GM12878 (cell line): ENCODE measurements at regions of chr5 and their contacts with region 1.

Region 1: DNA sequence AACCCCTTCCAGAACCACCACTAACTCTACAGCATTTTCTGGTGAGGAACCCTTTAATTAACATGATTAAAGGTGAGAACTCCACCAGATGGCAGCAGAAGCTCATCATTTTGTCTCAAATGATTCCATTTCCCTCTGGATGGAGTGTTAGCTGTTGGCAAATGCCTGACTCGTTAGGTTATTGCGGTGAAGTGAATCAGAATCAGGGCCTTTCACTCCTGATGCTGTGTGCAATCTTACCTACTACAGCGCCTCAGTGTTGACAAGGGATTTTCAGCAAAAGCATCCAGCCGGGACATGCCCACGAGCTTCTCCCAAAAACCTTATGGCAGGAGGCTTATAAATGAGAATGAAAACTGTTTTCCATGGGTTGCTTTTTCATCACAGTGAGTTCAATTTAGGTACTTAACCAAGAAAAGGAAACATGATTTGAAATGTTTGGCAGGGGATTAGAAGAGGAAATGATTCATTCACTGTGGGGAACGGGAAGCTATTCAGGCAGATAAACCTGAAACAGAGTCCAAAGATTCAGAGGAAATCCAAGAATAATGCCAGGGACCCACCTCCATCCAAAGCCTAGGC is 48.0 kb upstream of the CAST start:
- DNase-seq: peak; percentile 25
- ATAC-seq: peak; percentile 86
- H3K4me3 ChIP-seq: no peak overlapping the region
- H3K27ac ChIP-seq: no peak overlapping the region
- H3K4me1 ChIP-seq: no peaks in the 10 kb centered on the region
- H3K27me3 ChIP-seq: no peaks in the 10 kb centered on the region; a peak in 2 of 4 replicates
- CTCF ChIP-seq: peak; percentile 24 to 71 (median 45); a peak in 4 of 6 replicates
- EP300 ChIP-seq: no peak
- POLR2A ChIP-seq: no peak
- RAD21 ChIP-seq: peak; percentile 87

Region 2: DNA sequence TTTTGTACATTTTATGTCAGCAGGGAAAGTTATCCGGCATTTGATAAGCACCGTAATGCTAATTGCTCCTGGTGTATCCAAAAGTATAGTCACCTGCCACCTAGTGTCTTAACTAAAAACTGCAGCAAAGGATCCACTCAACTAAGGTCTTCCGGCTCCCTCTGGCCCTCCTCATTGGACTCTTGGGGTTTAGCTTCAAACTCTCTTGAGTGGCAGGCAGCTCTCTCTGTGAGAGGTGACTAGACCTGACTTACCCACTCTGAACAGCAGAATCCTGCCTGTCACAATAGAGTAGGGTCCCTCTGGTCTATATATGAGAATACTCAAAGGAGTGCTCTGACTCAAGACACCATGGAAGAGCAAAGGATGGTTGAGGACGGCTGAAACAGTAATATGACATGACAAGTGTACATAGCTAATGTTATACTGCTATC is 12.4 kb before region 1 on chr5:
- CTCF ChIA-PET with region 1: interaction called, 49 read pairs
- POLR2A ChIA-PET with region 1: no interaction called
- RAD21 ChIA-PET with region 1: interaction called, 6 read pairs
- SMC1A ChIA-PET with region 1: interaction called, 13 read pairs
- in situ Hi-C with region 1: no loop called
- intact Hi-C with region 1: no loop called
- DNase-seq: peak; percentile 16
- ATAC-seq: peak; percentile 96
- H3K4me3 ChIP-seq: no peak overlapping the region
- H3K27ac ChIP-seq: no peak overlapping the region
- H3K4me1 ChIP-seq: no peaks in the 10 kb centered on the region
- H3K27me3 ChIP-seq: no peaks in the 10 kb centered on the region
- CTCF ChIP-seq: peak; percentile 71 to 83 (median 77)
- EP300 ChIP-seq: no peak
- POLR2A ChIP-seq: no peak
- RAD21 ChIP-seq: peak; percentile 62

Region 3: GRCh38 chr5:96662725-96663513 is 48.7 kb after region 1 on chr5:
- CTCF ChIA-PET with region 1: interaction called, 6 read pairs
- POLR2A ChIA-PET with region 1: no interaction called
- RAD21 ChIA-PET with region 1: interaction called, 11 read pairs
- SMC1A ChIA-PET with region 1: interaction called, 3 read pairs
- in situ Hi-C with region 1: no loop called
- intact Hi-C with region 1: no loop called
- DNase-seq: peak; percentile 50
- ATAC-seq: peak; percentile 87
- H3K4me3 ChIP-seq: peak overlapping the region; percentile 75
- H3K27ac ChIP-seq: peak overlapping the region; percentile 70
- H3K4me1 ChIP-seq: peaks cover 6% of the 10 kb centered on the region
- H3K27me3 ChIP-seq: no peaks in the 10 kb centered on the region; a peak in 1 of 4 replicates
- CTCF ChIP-seq: no peak
- EP300 ChIP-seq: no peak
- POLR2A ChIP-seq: peak; percentile 71
- RAD21 ChIP-seq: no peak

Region 4: GRCh38 chr5:96702503-96703383 is 88.5 kb after region 1 on chr5:
- CTCF ChIA-PET with region 1: interaction called, 16 read pairs
- POLR2A ChIA-PET with region 1: no interaction called
- RAD21 ChIA-PET with region 1: interaction called, 5 read pairs
- SMC1A ChIA-PET with region 1: interaction called, 4 read pairs
- in situ Hi-C with region 1: no loop called
- intact Hi-C with region 1: no loop called
- DNase-seq: no peak
- ATAC-seq: peak; percentile 85
- H3K4me3 ChIP-seq: peak overlapping the region; percentile 78
- H3K27ac ChIP-seq: peak overlapping the region; percentile 60
- H3K4me1 ChIP-seq: peaks cover 8% of the 10 kb centered on the region; the same call in 1 of the 2 replicates
- H3K27me3 ChIP-seq: no peaks in the 10 kb centered on the region
- CTCF ChIP-seq: no peak
- EP300 ChIP-seq: 0 out of 4 replicates have a peak, but pooled peaks of 1 of the 2 experiments have one; percentile 14
- POLR2A ChIP-seq: peak; percentile 65
- RAD21 ChIP-seq: no peak

Region 5: GRCh38 chr5:96729156-96729555 is 115.0 kb after region 1 on chr5:
- CTCF ChIA-PET with region 1: interaction called, 33 read pairs
- POLR2A ChIA-PET with region 1: no interaction called
- RAD21 ChIA-PET with region 1: interaction called, 13 read pairs
- SMC1A ChIA-PET with region 1: interaction called, 21 read pairs
- in situ Hi-C with region 1: no loop called
- intact Hi-C with region 1: loop called (anchors 1 kb)
- DNase-seq: no peak
- ATAC-seq: no peak
- H3K4me3 ChIP-seq: no peak overlapping the region
- H3K27ac ChIP-seq: no peak overlapping the region
- H3K4me1 ChIP-seq: no peaks in the 10 kb centered on the region
- H3K27me3 ChIP-seq: no peaks in the 10 kb centered on the region
- CTCF ChIP-seq: peak in 1 of 3 experiments; percentile 36; a peak in 1 of 6 replicates
- EP300 ChIP-seq: no peak
- POLR2A ChIP-seq: no peak
- RAD21 ChIP-seq: peak; percentile 28; the same call in 1 of the 2 replicates

Region 6: DNA sequence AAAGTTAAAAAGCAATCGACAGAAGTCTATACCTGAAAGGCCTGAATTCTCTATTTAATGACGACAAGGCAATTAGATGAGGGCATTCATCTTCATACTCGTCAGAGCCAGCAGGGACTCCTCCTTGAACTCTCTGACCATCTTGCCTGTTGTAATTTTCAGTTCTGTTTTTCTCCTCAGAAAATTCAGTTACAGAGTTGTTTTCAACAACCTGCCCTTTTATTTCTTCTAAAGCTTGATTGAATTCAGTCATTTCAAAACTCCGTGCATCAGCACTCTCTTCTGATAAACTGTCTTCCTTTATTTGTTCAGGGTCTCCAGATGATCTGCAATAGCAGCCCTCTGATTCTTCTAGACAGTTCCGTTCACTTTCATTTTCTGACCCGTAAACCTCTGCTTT is 553.2 kb after region 1 on chr5:
- CTCF ChIA-PET with region 1: interaction called, 11 read pairs
- POLR2A ChIA-PET with region 1: no interaction called
- RAD21 ChIA-PET with region 1: interaction called, 3 read pairs
- SMC1A ChIA-PET with region 1: interaction called, 5 read pairs
- in situ Hi-C with region 1: loop called (anchors 10 kb)
- intact Hi-C with region 1: loop called (anchors 2 kb)
- DNase-seq: peak; percentile 51
- ATAC-seq: peak; percentile 89
- H3K4me3 ChIP-seq: peak overlapping the region; percentile 9; the same call in 1 of the 2 replicates
- H3K27ac ChIP-seq: peak overlapping the region; percentile 58
- H3K4me1 ChIP-seq: peaks cover 6% of the 10 kb centered on the region; the same call in 1 of the 2 replicates
- H3K27me3 ChIP-seq: no peaks in the 10 kb centered on the region
- CTCF ChIP-seq: no peak
- EP300 ChIP-seq: no peak
- POLR2A ChIP-seq: no peak
- RAD21 ChIP-seq: no peak